Right ventricle myocardium inferior (tissue), 1 donor: ENCODE measurements at regions of chr17 and their contacts with region 1.

Region 1: GRCh38 chr17:44170499-44171201 is at the start of gene ASB16:
- DNase-seq: no peak
- ATAC-seq: peak; percentile 78
- total RNA-seq, gene ASB16: 14.5 TPM

Region 2: DNA sequence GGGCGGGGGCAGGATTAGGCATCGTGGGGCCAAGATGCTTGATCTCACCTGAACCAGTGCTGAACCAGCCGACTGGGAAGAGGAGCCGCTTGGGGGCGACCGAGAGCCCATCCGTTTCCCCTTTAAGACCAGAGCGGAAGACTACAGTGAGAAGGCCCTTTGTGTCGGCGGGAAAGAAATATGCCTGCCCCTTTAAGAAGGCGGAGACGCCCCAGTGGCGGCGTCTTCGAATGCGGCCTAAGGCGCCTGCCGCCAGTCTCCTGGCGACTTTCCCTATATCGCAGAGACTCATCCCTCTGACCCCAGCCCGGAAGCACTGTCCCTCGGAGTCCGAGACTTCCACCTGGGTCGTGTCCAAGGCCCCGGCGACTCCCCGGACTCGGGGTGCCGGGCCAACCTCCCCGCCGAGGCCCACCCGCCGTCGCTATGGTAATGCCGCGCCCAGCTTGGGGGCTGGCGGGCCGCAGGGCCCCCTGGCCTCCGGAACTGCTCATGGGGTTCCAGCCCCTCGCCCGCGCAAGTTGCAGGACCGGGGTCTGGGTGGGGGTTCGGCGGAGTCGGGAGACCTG is 28.8 kb before region 1 on chr17 and contains the start of gene HROB:
- intact Hi-C with region 1: loop called (anchors 1 kb)
- DNase-seq: peak; percentile 95
- ATAC-seq: peak; percentile 88
- total RNA-seq, gene HROB: 2.0 TPM